B cell (primary cell): ENCODE measurements at regions of chr1 and their contacts with region 1.

Region 1: GRCh38 chr1:153231363-153231762 is 14.0 kb downstream of the PRR9 start:
- DNase-seq: no peak
- ATAC-seq: no peak
- H3K4me3 ChIP-seq: no peak overlapping the region
- H3K4me3 Mint-ChIP-seq: no peak overlapping the region
- H3K27ac ChIP-seq: no peak overlapping the region
- H3K27ac Mint-ChIP-seq: no peak overlapping the region
- H3K4me1 ChIP-seq: no peaks in the 10 kb centered on the region
- H3K4me1 Mint-ChIP-seq: no peaks in the 10 kb centered on the region
- H3K27me3 ChIP-seq: peaks cover 0 to 4% (median 0%) of the 10 kb centered on the region in 4 experiments
- H3K27me3 Mint-ChIP-seq: peaks cover 24% of the 10 kb centered on the region
- CTCF ChIP-seq: no peak

Region 2: GRCh38 chr1:153087652-153088051 is 143.7 kb before region 1 on chr1:
- CTCF ChIA-PET with region 1: no interaction called
- POLR2A ChIA-PET with region 1: no interaction called
- intact Hi-C with region 1: no loop called
- DNase-seq: no peak
- ATAC-seq: no peak
- H3K4me3 ChIP-seq: no peak overlapping the region
- H3K4me3 Mint-ChIP-seq: no peak overlapping the region
- H3K27ac ChIP-seq: no peak overlapping the region
- H3K27ac Mint-ChIP-seq: no peak overlapping the region
- H3K4me1 ChIP-seq: no peaks in the 10 kb centered on the region
- H3K4me1 Mint-ChIP-seq: no peaks in the 10 kb centered on the region
- H3K27me3 ChIP-seq: no peaks in the 10 kb centered on the region
- H3K27me3 Mint-ChIP-seq: peaks cover 29% of the 10 kb centered on the region
- CTCF ChIP-seq: no peak

Region 3: GRCh38 chr1:153220606-153221303 is 10.6 kb before region 1 on chr1:
- CTCF ChIA-PET with region 1: interaction called, 15 read pairs
- POLR2A ChIA-PET with region 1: no interaction called
- intact Hi-C with region 1: no loop called
- DNase-seq: no peak
- ATAC-seq: no peak
- H3K4me3 ChIP-seq: no peak overlapping the region
- H3K4me3 Mint-ChIP-seq: no peak overlapping the region
- H3K27ac ChIP-seq: no peak overlapping the region
- H3K27ac Mint-ChIP-seq: no peak overlapping the region
- H3K4me1 ChIP-seq: no peaks in the 10 kb centered on the region
- H3K4me1 Mint-ChIP-seq: no peaks in the 10 kb centered on the region
- H3K27me3 ChIP-seq: peaks cover 0 to 19% (median 3%) of the 10 kb centered on the region in 4 experiments
- H3K27me3 Mint-ChIP-seq: peaks cover 28% of the 10 kb centered on the region
- CTCF ChIP-seq: no peak

Region 4: DNA sequence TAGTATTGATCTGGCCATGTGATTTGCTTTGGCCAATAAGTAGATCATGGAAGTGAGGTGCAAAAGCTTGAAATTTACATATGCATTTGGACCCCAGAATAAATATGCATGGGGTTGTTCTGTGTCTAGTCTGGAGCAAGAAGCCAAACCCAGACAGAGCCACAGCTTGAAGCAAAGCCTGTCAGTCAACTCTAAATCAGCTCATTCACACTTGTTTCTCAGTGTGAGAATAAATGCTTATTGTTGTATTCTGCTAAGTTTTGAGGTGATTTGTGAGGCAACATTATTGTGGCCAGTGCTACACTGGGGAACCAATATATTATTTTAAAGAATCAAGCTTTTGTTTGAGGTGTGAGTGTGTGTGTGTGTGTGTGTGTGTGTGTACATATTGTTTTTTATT is 93.5 kb after region 1 on chr1:
- CTCF ChIA-PET with region 1: no interaction called
- POLR2A ChIA-PET with region 1: no interaction called
- intact Hi-C with region 1: no loop called
- DNase-seq: no peak
- ATAC-seq: no peak
- H3K4me3 ChIP-seq: no peak overlapping the region
- H3K4me3 Mint-ChIP-seq: no peak overlapping the region
- H3K27ac ChIP-seq: no peak overlapping the region
- H3K27ac Mint-ChIP-seq: no peak overlapping the region
- H3K4me1 ChIP-seq: no peaks in the 10 kb centered on the region
- H3K4me1 Mint-ChIP-seq: no peaks in the 10 kb centered on the region
- H3K27me3 ChIP-seq: peaks cover 0 to 20% (median 3%) of the 10 kb centered on the region in 4 experiments
- H3K27me3 Mint-ChIP-seq: peaks cover 39% of the 10 kb centered on the region
- CTCF ChIP-seq: no peak